Activated CD8-positive, alpha-beta memory T cell treated with anti-CD3 and anti-CD28 coated beads, Interleukin-2, amount 10 ng/mL, durations not matched to agents 7 days and 5 days (primary cell): ENCODE measurements at regions of chr11 and their contacts with region 1.

Region 1: GRCh38 chr11:30210357-30210756 is 20.5 kb upstream of the FSHB start:
- DNase-seq: no peak
- ATAC-seq: no peak
- H3K4me3 Mint-ChIP-seq: no peak overlapping the region
- H3K27ac Mint-ChIP-seq: no peak overlapping the region
- H3K4me1 Mint-ChIP-seq: no peaks in the 10 kb centered on the region
- H3K27me3 Mint-ChIP-seq: peaks cover 6% of the 10 kb centered on the region

Region 2: DNA sequence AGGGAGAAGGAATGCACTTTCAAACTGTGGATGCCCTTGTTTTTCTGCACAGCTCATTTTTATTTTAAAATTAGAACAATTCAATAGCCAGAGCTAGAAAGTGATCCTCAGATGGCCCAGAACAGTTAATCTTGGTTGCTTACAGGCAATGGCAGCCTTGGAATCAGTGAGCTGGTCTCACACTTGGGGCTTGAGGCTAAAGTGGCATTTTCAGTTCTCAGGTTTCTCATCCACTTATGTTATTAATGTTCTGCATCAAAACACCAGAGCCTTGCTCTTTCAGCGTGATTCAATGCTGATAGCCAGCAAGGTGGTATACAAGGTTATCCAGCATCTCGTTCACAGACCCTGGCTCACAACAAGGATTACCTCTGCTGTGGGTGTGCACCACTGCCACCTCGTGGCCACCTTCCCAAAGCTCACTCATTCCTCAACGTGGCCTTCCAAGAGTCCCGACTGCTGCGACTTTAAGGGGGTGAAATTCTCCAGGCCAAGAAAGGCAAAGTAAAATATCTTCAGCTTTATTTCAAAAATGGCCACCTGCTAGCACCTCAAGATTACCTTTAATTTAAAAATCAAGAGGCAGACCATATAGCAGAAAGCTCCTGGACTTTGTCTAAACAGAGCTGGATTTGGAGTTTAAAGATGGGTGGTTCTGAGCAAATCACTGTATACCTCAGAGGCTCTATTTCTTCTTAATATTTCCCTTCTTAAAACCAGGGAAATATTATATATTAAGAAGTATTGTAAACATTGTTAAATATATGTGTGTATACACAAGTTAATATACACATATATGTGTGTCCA is 13.8 kb before region 1 on chr11:
- CTCF ChIA-PET with region 1: interaction called, 10 read pairs
- DNase-seq: peak; percentile 56
- ATAC-seq: peak; percentile 68
- H3K4me3 Mint-ChIP-seq: no peak overlapping the region
- H3K27ac Mint-ChIP-seq: no peak overlapping the region
- H3K4me1 Mint-ChIP-seq: no peaks in the 10 kb centered on the region
- H3K27me3 Mint-ChIP-seq: no peaks in the 10 kb centered on the region